ENCODE measurements at regions of chr6 and their contacts with region 1.

Region 1: GRCh38 chr6:83514866-83515466 is 2.6 kb downstream of the PRSS35 start:
- DNase-seq: peak in 3 of 35 experiments; percentile 4 to 52 (median 18)
- ATAC-seq: no peak
- H3K4me3 ChIP-seq: no peak overlapping the region
- H3K4me3 Mint-ChIP-seq: no peak overlapping the region
- H3K27ac ChIP-seq: no peak overlapping the region
- H3K27ac Mint-ChIP-seq: no peak overlapping the region
- H3K4me1 ChIP-seq: peaks cover 0 to 9% of the 10 kb centered on the region in 2 experiments
- H3K4me1 Mint-ChIP-seq: peaks cover 0 to 14% (median 14%) of the 10 kb centered on the region in 3 donors
- H3K27me3 ChIP-seq: peaks cover 2 to 9% of the 10 kb centered on the region in 2 experiments
- H3K27me3 Mint-ChIP-seq: peaks cover 37 to 41% of the 10 kb centered on the region in 2 donors

Region 2: DNA sequence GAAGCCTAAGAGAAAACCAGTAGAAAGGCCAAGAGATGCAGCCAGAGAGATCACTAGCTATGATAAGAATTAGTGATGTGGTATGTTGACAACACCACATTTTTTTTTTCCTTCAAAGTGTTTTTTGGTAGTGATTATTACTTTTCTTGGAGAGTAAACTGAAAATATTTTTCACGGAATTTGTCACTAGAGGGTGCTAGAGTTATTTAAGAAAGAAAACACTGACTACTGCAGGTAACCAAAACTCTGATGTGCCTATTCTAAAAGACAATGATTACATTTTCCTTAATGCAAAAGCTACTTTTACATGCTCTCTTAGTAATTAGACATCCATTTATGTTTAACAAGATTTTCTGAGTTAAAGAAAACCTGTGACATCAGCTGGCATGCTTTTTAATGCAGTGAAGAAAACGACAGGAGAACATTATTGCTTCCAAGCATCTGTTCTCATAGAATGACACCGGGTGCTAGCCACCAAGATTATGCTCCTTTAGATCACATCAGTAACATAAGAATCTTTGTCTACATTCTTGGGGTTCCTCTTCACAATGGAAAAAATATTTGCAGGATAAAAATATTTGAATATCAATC is 293.0 kb before region 1 on chr6:
- CTCF ChIA-PET with region 1: interaction called, 7 to 40 read pairs
- POLR2A ChIA-PET with region 1: interaction called in 1 of 2 experiments, 3 read pairs
- DNase-seq: peak in 1 of 35 experiments; percentile 46
- ATAC-seq: no peak
- H3K4me3 ChIP-seq: no peak overlapping the region
- H3K4me3 Mint-ChIP-seq: no peak overlapping the region
- H3K27ac ChIP-seq: no peak overlapping the region
- H3K27ac Mint-ChIP-seq: no peak overlapping the region
- H3K4me1 ChIP-seq: no peaks in the 10 kb centered on the region
- H3K4me1 Mint-ChIP-seq: no peaks in the 10 kb centered on the region
- H3K27me3 ChIP-seq: no peaks in the 10 kb centered on the region
- H3K27me3 Mint-ChIP-seq: peaks cover 0 to 4% of the 10 kb centered on the region in 2 donors

Region 3: DNA sequence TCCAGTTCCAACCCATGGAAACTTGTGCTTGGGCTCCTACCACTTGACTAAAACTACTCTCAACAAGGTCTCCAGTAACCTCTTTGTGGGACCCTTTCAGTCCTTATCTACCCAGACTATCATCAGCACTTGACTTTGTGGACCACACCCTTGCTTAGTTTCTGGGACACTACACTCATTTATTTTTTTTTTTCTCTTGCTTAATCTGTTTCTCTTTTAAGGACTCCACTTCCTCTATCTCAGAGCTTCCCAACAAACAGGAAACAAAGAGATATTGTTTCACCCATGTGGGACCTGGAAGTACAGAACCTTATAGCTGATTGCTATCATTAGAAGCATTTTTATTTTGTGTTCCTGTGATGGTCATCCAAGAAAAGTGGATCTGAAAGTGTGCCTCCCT is 55.3 kb before region 1 on chr6:
- CTCF ChIA-PET with region 1: no interaction called
- POLR2A ChIA-PET with region 1: no interaction called
- DNase-seq: no peak
- ATAC-seq: no peak
- H3K4me3 ChIP-seq: no peak overlapping the region
- H3K4me3 Mint-ChIP-seq: no peak overlapping the region
- H3K27ac ChIP-seq: no peak overlapping the region
- H3K27ac Mint-ChIP-seq: no peak overlapping the region
- H3K4me1 ChIP-seq: no peaks in the 10 kb centered on the region
- H3K4me1 Mint-ChIP-seq: no peaks in the 10 kb centered on the region
- H3K27me3 ChIP-seq: no peaks in the 10 kb centered on the region
- H3K27me3 Mint-ChIP-seq: peaks cover 0 to 7% of the 10 kb centered on the region in 2 donors

Region 4: DNA sequence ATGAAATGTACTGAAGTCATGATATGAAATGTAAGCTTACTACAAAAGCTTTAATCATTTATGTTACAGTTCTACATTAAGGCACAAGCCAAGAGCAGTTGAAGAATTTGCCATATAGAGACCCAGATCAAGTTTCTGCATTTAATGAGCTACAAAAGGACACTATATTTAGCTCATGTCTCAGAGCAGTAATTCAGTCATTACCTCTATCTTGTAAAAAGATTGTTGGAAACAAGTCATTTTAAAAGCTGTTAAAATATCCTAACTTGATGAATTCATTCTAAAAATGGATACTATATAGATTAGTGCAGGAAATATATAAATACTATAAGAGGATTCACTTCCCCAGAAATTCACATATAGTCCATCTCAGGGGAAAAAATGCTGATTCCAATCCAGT is 293.0 kb after region 1 on chr6:
- CTCF ChIA-PET with region 1: interaction called in 1 of 2 experiments, 11 read pairs
- POLR2A ChIA-PET with region 1: no interaction called
- DNase-seq: no peak
- ATAC-seq: no peak
- H3K4me3 ChIP-seq: no peak overlapping the region
- H3K4me3 Mint-ChIP-seq: no peak overlapping the region
- H3K27ac ChIP-seq: no peak overlapping the region
- H3K27ac Mint-ChIP-seq: no peak overlapping the region
- H3K4me1 ChIP-seq: no peaks in the 10 kb centered on the region
- H3K4me1 Mint-ChIP-seq: no peaks in the 10 kb centered on the region
- H3K27me3 ChIP-seq: no peaks in the 10 kb centered on the region
- H3K27me3 Mint-ChIP-seq: peaks cover 5 to 7% of the 10 kb centered on the region in 2 donors

Measured in T-cell (primary cell).